Naive thymus-derived CD4-positive, alpha-beta T cell (primary cell): ENCODE measurements at regions of chr15 and their contacts with region 1.

Region 1: GRCh38 chr15:64702816-64703646 is 72.4 kb downstream of the RBPMS2 start:
- DNase-seq: peak; percentile 87 to 98 (median 92)
- ATAC-seq: peak; percentile 98
- H3K4me3 ChIP-seq: peak overlapping the region; percentile 93
- H3K4me3 Mint-ChIP-seq: peak overlapping the region; percentile 78 to 97 (median 84)
- H3K27ac ChIP-seq: peak overlapping the region; percentile 80
- H3K27ac Mint-ChIP-seq: peak overlapping the region; percentile 67 to 95 (median 91)
- H3K4me1 ChIP-seq: peaks cover 40 to 43% of the 10 kb centered on the region in 2 donors
- H3K4me1 Mint-ChIP-seq: peaks cover 46 to 57% (median 52%) of the 10 kb centered on the region in 7 donors
- H3K27me3 ChIP-seq: no peaks in the 10 kb centered on the region
- H3K27me3 Mint-ChIP-seq: no peaks in the 10 kb centered on the region

Region 2: DNA sequence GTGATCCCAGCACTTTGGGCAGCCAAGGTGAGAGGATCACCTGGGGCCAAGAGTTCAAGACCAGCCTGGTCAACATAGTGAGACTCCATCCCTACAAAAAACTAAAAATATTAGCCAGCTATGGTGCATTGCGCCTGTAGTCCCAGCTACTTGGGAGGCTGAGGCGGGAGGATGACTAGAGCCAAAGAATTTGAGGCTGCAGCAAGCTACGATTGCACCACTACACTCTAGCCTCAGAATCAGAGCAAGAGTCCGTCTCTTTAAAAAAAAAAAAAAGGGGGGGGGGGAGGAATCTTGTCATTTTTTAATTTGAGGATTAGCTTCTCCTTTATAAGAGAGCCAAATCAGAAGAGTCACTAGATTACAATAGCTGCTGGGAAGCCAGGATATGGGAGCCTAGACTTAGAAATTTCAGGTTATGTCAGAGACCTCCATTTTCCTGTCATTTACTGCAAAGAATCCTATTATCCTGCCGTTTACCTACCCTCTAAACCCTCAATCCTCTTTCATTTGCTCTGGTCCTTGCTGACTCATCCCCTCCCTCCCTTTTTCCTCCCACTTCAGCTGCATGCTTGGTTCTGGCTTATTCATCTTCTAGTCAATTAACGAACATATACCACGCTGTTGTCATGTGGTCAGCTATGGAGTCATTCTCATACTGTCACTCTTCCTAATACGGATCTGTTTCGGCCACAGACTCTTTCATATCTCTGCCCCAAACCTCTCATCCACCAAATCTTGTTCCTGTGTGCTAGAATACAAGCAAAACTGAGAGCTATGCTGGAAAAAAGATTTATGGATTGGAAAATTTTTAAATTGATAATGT is 456.5 kb before region 1 on chr15:
- CTCF ChIA-PET with region 1: no interaction called
- POLR2A ChIA-PET with region 1: no interaction called
- intact Hi-C with region 1: no loop called
- DNase-seq: peak in 1 of 9 donors; percentile 53
- ATAC-seq: peak; percentile 65
- H3K4me3 ChIP-seq: no peak overlapping the region
- H3K4me3 Mint-ChIP-seq: peak overlapping the region in 1 of 10 donors; percentile 68
- H3K27ac ChIP-seq: no peak overlapping the region
- H3K27ac Mint-ChIP-seq: peak overlapping the region in 1 of 9 donors; percentile 38
- H3K4me1 ChIP-seq: peaks cover 0 to 24% of the 10 kb centered on the region in 2 donors
- H3K4me1 Mint-ChIP-seq: peaks cover 8 to 44% (median 19%) of the 10 kb centered on the region in 7 donors
- H3K27me3 ChIP-seq: no peaks in the 10 kb centered on the region
- H3K27me3 Mint-ChIP-seq: no peaks in the 10 kb centered on the region

Region 3: GRCh38 chr15:64387562-64388168 is 315.4 kb before region 1 on chr15 and contains the start of gene TRIP4:
- CTCF ChIA-PET with region 1: no interaction called
- POLR2A ChIA-PET with region 1: interaction called, 4 read pairs
- intact Hi-C with region 1: loop called in 1 of 2 experiments (anchors 1 kb)
- DNase-seq: peak; percentile 90 to 97 (median 96)
- ATAC-seq: peak; percentile 100
- H3K4me3 ChIP-seq: peak within 1 kb of the TSS; percentile 97
- H3K4me3 Mint-ChIP-seq: peak within 1 kb of the TSS; percentile 95 to 99 (median 97)
- H3K27ac ChIP-seq: peak within 1 kb of the TSS; percentile 64
- H3K27ac Mint-ChIP-seq: peak within 1 kb of the TSS; percentile 84 to 99 (median 92)
- H3K4me1 ChIP-seq: peaks cover 8 to 10% of the 10 kb centered on the region in 2 donors
- H3K4me1 Mint-ChIP-seq: peaks cover 17 to 24% (median 19%) of the 10 kb centered on the region in 7 donors
- H3K27me3 ChIP-seq: no peaks in the 10 kb centered on the region
- H3K27me3 Mint-ChIP-seq: no peaks in the 10 kb centered on the region
- total RNA-seq, gene TRIP4: 16.5 to 29.3 (median 25.4) TPM

Region 4: GRCh38 chr15:64681424-64682024 is 21.5 kb before region 1 on chr15:
- CTCF ChIA-PET with region 1: interaction called, 6 read pairs
- POLR2A ChIA-PET with region 1: interaction called, 4 read pairs
- intact Hi-C with region 1: loop called in 1 of 2 experiments (anchors 2 kb)
- DNase-seq: no peak
- ATAC-seq: peak; percentile 46
- H3K4me3 ChIP-seq: no peak overlapping the region
- H3K4me3 Mint-ChIP-seq: peak overlapping the region in 1 of 10 donors; percentile 53
- H3K27ac ChIP-seq: no peak overlapping the region
- H3K27ac Mint-ChIP-seq: peak overlapping the region in 6 of 9 donors; percentile 34 to 78 (median 61)
- H3K4me1 ChIP-seq: no peaks in the 10 kb centered on the region
- H3K4me1 Mint-ChIP-seq: peaks cover 0 to 31% (median 4%) of the 10 kb centered on the region in 7 donors
- H3K27me3 ChIP-seq: no peaks in the 10 kb centered on the region
- H3K27me3 Mint-ChIP-seq: no peaks in the 10 kb centered on the region

Region 5: GRCh38 chr15:64841258-64842095 is 138.4 kb after region 1 on chr15 and contains the start of gene PLEKHO2:
- CTCF ChIA-PET with region 1: no interaction called
- POLR2A ChIA-PET with region 1: interaction called, 3 read pairs
- intact Hi-C with region 1: loop called in 1 of 2 experiments (anchors 1 kb)
- DNase-seq: peak; percentile 70 to 88 (median 80)
- ATAC-seq: peak; percentile 85
- H3K4me3 ChIP-seq: peak within 1 kb of the TSS; percentile 65
- H3K4me3 Mint-ChIP-seq: peak within 1 kb of the TSS; percentile 85 to 98 (median 96)
- H3K27ac ChIP-seq: peak within 1 kb of the TSS; percentile 81
- H3K27ac Mint-ChIP-seq: peak within 1 kb of the TSS; percentile 83 to 96 (median 91)
- H3K4me1 ChIP-seq: peaks cover 48 to 62% of the 10 kb centered on the region in 2 donors
- H3K4me1 Mint-ChIP-seq: peaks cover 63 to 89% (median 86%) of the 10 kb centered on the region in 7 donors
- H3K27me3 ChIP-seq: no peaks in the 10 kb centered on the region
- H3K27me3 Mint-ChIP-seq: no peaks in the 10 kb centered on the region
- total RNA-seq, gene PLEKHO2: 8.6 to 52.3 (median 14.0) TPM

Region 6: GRCh38 chr15:65298731-65299130 is 595.7 kb after region 1 on chr15:
- CTCF ChIA-PET with region 1: no interaction called
- POLR2A ChIA-PET with region 1: no interaction called
- intact Hi-C with region 1: loop called (anchors 5 to 10 kb)
- DNase-seq: no peak
- ATAC-seq: no peak
- H3K4me3 ChIP-seq: no peak overlapping the region
- H3K4me3 Mint-ChIP-seq: peak overlapping the region; percentile 64 to 97 (median 84)
- H3K27ac ChIP-seq: peak overlapping the region; percentile 54
- H3K27ac Mint-ChIP-seq: peak overlapping the region; percentile 10 to 95 (median 78)
- H3K4me1 ChIP-seq: peaks cover 17 to 20% of the 10 kb centered on the region in 2 donors
- H3K4me1 Mint-ChIP-seq: peaks cover 12 to 42% (median 34%) of the 10 kb centered on the region in 7 donors
- H3K27me3 ChIP-seq: no peaks in the 10 kb centered on the region
- H3K27me3 Mint-ChIP-seq: peaks cover 0 to 2% (median 0%) of the 10 kb centered on the region in 5 donors